SK-N-SH (cell line): ENCODE measurements at regions of chrX and their contacts with region 1.

Region 1: GRCh38 chrX:118823263-118824172 is at the start of gene ZCCHC12:
- DNase-seq: peak; percentile 77
- H3K4me3 ChIP-seq: peak within 1 kb of the TSS; percentile 46 to 64
- H3K27ac ChIP-seq: no peak within 1 kb of the TSS
- H3K4me1 ChIP-seq: no peaks in the 10 kb centered on the region; a peak in 1 of 4 replicates
- H3K27me3 ChIP-seq: peaks cover 32% of the 10 kb centered on the region
- CTCF ChIP-seq: no peak; the same call in 1 of the 2 replicates
- EP300 ChIP-seq: no peak
- RAD21 ChIP-seq: no peak
- polyA plus RNA-seq, gene ZCCHC12: 0.26 and 0.31 TPM in 2 replicates

Region 2: GRCh38 chrX:118839334-118839958 is 15.9 kb after region 1 on chrX:
- CTCF ChIA-PET with region 1: interaction called, 11 read pairs
- POLR2A ChIA-PET with region 1: interaction called, 4 read pairs
- DNase-seq: peak; percentile 90
- H3K4me3 ChIP-seq: peak overlapping the region; percentile 46 to 55
- H3K27ac ChIP-seq: no peak overlapping the region
- H3K4me1 ChIP-seq: peaks cover 0 to 2% of the 10 kb centered on the region in 2 experiments; a peak in 1 of 4 replicates
- H3K27me3 ChIP-seq: peaks cover 10% of the 10 kb centered on the region; the same call in 1 of the 2 replicates
- CTCF ChIP-seq: peak; percentile 66
- EP300 ChIP-seq: no peak
- RAD21 ChIP-seq: no peak

Region 3: GRCh38 chrX:119062750-119063374 is 239.3 kb after region 1 on chrX:
- CTCF ChIA-PET with region 1: no interaction called
- POLR2A ChIA-PET with region 1: no interaction called
- DNase-seq: no peak
- H3K4me3 ChIP-seq: no peak overlapping the region
- H3K27ac ChIP-seq: no peak overlapping the region
- H3K4me1 ChIP-seq: no peaks in the 10 kb centered on the region
- H3K27me3 ChIP-seq: no peaks in the 10 kb centered on the region
- CTCF ChIP-seq: no peak
- EP300 ChIP-seq: no peak
- RAD21 ChIP-seq: no peak